Posterior vena cava (tissue), 2 donors: ENCODE measurements at regions of chr12 and their contacts with region 1.

Region 1: DNA sequence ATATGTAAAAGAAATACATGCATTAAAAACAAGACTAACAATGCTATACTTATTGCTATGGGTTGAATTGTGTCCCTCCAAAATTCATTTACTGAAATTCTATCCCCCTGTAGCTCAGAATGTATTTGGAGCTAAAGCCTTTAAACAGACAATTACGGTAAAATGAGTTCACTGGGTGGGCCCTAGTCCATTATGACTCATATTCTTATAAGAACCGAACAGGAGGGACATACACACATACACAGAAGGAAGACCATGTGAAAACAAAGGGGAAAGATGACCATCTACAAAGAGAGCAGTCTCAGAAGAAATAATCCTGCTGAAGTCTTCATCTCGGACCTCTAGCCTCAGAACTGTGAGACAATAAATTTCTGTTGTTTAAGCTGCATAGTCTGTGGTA is 77.1 kb upstream of the ANKS1B start:
- DNase-seq: no peak

Region 2: DNA sequence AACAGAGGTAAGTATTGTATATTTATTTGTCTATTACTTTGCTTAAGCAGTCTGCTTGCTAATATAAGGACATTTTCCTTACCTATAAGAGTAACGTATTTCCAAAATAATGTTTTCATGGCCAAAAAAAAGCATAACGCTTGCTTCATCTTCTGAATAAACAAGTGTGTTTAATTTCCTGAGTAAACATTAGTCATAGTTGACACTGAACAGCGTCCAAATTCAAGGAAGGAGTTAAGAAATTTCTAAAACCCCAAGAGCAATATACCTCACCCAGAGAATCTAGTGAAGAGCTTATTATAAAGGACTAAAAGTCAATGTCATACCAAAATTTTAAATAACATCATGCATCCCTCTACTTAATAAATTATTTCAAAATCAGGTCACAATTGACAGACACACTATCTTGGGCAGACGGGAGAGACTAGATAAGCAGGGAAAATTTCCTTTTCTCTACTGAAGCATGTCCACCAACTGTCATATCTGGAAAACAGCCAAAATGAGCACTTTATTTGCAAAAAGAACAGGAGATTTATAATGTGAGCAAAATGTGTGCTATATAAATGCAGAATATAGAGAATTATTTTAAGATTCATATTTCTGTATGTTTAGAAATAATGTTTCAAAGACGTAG is 102.2 kb before region 1 on chr12:
- intact Hi-C with region 1: no loop called
- DNase-seq: no peak

Region 3: GRCh38 chr12:100329800-100330199 is 268.0 kb after region 1 on chr12:
- intact Hi-C with region 1: loop called in 1 of 2 experiments (anchors 2 kb)
- DNase-seq: no peak

Region 4: GRCh38 chr12:100668945-100669536 is 607.2 kb after region 1 on chr12:
- intact Hi-C with region 1: loop called in 1 of 2 experiments (anchors 5 kb)
- DNase-seq: peak; percentile 89